Activated CD4-positive, alpha-beta T cell treated with anti-CD3 and anti-CD28 coated beads, Interleukin-2, amount 10 ng/mL, durations not matched to agents 24 days and 14 days (primary cell): ENCODE measurements at regions of chr21 and their contacts with region 1.

Region 1: GRCh38 chr21:31343680-31344480 is at the start of gene TIAM1:
- DNase-seq: peak; percentile 75
- H3K4me3 Mint-ChIP-seq: peak within 1 kb of the TSS; percentile 97
- H3K27ac Mint-ChIP-seq: peak within 1 kb of the TSS; percentile 90
- H3K4me1 Mint-ChIP-seq: peaks cover 67% of the 10 kb centered on the region
- H3K27me3 Mint-ChIP-seq: peaks cover 17% of the 10 kb centered on the region
- total RNA-seq, gene TIAM1: 104 and 105 TPM in 2 replicates

Region 2: DNA sequence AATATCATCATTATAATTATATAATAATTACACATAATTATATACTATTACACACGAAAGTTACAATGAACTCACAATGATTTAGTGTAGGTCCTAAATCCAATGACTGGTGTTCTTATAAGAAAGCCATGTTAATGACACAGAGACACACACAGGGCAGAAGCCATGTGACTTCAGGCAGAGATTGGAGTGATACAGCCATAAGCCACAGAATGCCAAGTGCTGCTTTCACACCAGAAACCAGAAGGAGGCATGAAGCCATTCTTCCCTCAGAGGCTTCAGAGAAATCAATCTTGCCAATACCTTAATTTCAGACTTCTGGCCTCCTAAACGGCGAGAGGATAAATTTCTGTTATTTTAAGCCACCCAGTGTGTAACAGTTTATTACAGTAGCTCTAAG is 158.2 kb before region 1 on chr21:
- intact Hi-C with region 1: loop called (anchors 2 kb)
- DNase-seq: peak; percentile 76
- H3K4me3 Mint-ChIP-seq: peak overlapping the region; percentile 81
- H3K27ac Mint-ChIP-seq: peak overlapping the region; percentile 80
- H3K4me1 Mint-ChIP-seq: peaks cover 73% of the 10 kb centered on the region
- H3K27me3 Mint-ChIP-seq: no peaks in the 10 kb centered on the region

Region 3: GRCh38 chr21:31293986-31294385 is 49.9 kb before region 1 on chr21:
- intact Hi-C with region 1: loop called (anchors 1 kb)
- DNase-seq: peak; percentile 58
- H3K4me3 Mint-ChIP-seq: peak overlapping the region; percentile 54
- H3K27ac Mint-ChIP-seq: peak overlapping the region; percentile 87
- H3K4me1 Mint-ChIP-seq: peaks cover 44% of the 10 kb centered on the region
- H3K27me3 Mint-ChIP-seq: no peaks in the 10 kb centered on the region

Region 4: DNA sequence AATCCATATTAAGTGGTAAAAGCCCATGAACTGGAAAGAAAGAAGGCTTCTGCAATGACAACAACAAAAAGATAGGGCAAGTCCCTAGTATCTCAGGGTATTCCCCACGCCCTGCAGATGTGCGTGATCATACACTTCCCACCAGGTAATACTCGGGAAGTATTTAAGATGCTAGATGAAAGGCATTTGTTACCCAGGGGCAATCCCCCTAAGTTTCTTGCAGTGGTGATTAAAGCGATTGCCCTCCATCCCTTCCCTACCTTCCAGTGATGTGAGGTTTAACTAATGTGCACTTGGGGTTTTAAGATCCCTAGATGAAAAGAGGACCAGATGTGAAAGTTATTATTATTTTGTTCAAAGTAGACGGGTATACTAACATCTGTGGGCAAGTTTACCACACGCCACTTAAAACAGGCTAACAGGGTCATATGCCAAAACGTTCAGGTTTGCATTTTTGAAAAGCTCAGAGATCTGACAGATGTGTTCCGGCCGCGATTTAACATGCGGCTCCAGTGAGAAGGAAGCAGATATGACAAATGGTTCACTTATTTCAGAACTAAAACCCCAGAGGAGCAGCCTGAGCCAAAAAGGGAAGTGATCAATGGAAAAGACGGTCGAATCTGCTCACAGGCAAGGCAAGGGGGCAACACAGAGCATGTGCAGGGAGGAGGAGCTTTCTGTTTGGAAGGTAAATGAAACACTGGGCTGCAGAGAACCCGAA is 17.2 kb before region 1 on chr21:
- intact Hi-C with region 1: loop called (anchors 1 kb)
- DNase-seq: peak; percentile 80
- H3K4me3 Mint-ChIP-seq: peak overlapping the region; percentile 74
- H3K27ac Mint-ChIP-seq: peak overlapping the region; percentile 92
- H3K4me1 Mint-ChIP-seq: peaks cover 28% of the 10 kb centered on the region
- H3K27me3 Mint-ChIP-seq: no peaks in the 10 kb centered on the region

Region 5: GRCh38 chr21:31354604-31355443 is 10.9 kb after region 1 on chr21:
- intact Hi-C with region 1: loop called (anchors 1 kb)
- DNase-seq: peak; percentile 95
- H3K4me3 Mint-ChIP-seq: peak overlapping the region; percentile 44
- H3K27ac Mint-ChIP-seq: peak overlapping the region; percentile 87
- H3K4me1 Mint-ChIP-seq: peaks cover 40% of the 10 kb centered on the region
- H3K27me3 Mint-ChIP-seq: peaks cover 5% of the 10 kb centered on the region

Region 6: GRCh38 chr21:31426235-31426797 is 82.4 kb after region 1 on chr21:
- intact Hi-C with region 1: loop called (anchors 1 kb)
- DNase-seq: peak; percentile 67
- H3K4me3 Mint-ChIP-seq: peak overlapping the region; percentile 26
- H3K27ac Mint-ChIP-seq: peak overlapping the region; percentile 66
- H3K4me1 Mint-ChIP-seq: peaks cover 16% of the 10 kb centered on the region
- H3K27me3 Mint-ChIP-seq: peaks cover 7% of the 10 kb centered on the region